ENCODE measurements at regions of chr2 and their contacts with region 1.

Region 1: GRCh38 chr2:45643543-45644542 is 7.6 kb upstream of the PRKCE start:
- DNase-seq: peak; percentile 70
- H3K4me3 ChIP-seq: peak overlapping the region; percentile 62
- H3K27ac ChIP-seq: no peak overlapping the region
- H3K4me1 ChIP-seq: peaks cover 3% of the 10 kb centered on the region
- CTCF ChIP-seq: peak; percentile 92

Region 2: DNA sequence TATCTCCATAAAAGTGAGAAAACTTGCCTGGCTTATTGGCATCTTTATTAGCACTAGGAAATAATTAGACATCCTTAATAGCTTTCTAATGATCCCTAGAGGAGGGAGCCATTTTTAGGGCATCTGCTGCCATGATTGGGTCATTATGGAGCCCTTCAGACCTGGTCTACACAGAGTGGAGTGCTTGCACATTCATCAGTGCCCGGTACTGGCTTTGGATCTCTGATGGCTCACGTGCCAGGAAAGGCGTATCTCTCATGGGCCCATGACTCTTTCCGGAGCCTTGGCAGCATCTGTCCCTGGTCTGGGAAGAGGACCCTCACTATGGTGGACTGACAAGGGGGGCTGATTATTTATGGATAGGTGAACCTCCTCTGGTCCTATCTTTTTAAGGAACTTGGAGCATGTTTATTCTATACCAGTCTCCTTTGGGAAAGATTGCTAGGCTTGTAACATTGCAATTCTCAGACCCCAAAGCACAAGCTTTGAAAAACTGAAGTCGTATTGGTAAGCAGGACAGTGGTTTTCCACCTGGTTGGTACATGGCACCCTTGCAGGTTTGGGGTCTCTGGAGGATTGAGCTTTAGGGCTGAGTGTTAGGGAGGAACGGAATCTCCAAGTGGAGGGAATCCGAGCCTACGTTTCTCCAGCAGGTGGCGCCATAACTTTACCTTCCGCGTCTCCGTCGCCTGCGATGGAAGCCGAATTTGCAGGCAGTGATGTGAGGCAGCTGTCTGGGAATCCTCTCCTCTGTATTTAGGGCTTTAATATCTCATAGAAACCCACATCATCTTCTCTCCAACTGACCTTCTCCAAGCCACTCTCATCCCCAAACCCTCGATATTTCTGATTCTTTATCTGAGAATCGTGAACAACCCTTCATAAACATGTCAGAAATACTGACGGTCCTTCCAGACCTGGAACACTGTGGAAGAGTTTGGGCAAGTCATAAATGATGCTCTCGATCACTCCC is 662.4 kb before region 1 on chr2:
- CTCF ChIA-PET with region 1: no interaction called
- POLR2A ChIA-PET with region 1: no interaction called
- intact Hi-C with region 1: loop called (anchors 5 kb)
- DNase-seq: peak; percentile 87
- H3K4me3 ChIP-seq: no peak overlapping the region
- H3K27ac ChIP-seq: peak overlapping the region; percentile 37
- H3K4me1 ChIP-seq: peaks cover 21% of the 10 kb centered on the region
- CTCF ChIP-seq: peak; percentile 96

Region 3: GRCh38 chr2:45833968-45834344 is 190.1 kb after region 1 on chr2:
- CTCF ChIA-PET with region 1: interaction called, 4 read pairs
- POLR2A ChIA-PET with region 1: interaction called, 6 read pairs
- intact Hi-C with region 1: loop called (anchors 1 kb)
- DNase-seq: peak; percentile 86
- H3K4me3 ChIP-seq: peak overlapping the region; percentile 32
- H3K27ac ChIP-seq: peak overlapping the region; percentile 83
- H3K4me1 ChIP-seq: peaks cover 57% of the 10 kb centered on the region
- CTCF ChIP-seq: no peak

Region 4: DNA sequence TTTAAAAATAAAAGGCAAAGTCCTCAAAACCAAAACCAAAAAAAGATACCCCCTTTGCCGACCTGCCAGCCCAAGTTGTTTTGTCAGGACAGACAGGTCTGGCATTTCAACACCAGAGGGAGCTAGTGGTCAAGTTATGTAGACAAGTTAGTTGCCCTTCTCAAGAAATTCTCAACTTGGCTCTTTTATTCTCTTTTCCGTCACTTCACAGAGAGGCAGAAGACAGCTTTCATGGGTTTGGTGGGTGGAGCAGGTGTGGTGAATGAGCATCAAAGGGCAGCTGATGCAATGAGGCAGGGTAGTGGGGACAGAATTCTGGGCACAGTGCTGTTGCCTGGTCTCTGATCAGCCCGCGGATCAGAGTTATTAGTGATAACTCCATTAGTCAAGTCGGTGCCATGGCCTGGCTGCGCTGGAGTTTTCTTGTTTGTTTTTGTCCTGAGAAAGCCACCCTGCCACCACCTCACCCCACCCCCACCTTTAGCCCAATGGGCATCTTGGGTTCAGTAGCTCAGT is 349.7 kb after region 1 on chr2:
- CTCF ChIA-PET with region 1: no interaction called
- POLR2A ChIA-PET with region 1: no interaction called
- intact Hi-C with region 1: loop called (anchors 1 kb)
- DNase-seq: peak; percentile 73
- H3K4me3 ChIP-seq: no peak overlapping the region
- H3K27ac ChIP-seq: no peak overlapping the region
- H3K4me1 ChIP-seq: no peaks in the 10 kb centered on the region
- CTCF ChIP-seq: peak; percentile 83

Region 5: DNA sequence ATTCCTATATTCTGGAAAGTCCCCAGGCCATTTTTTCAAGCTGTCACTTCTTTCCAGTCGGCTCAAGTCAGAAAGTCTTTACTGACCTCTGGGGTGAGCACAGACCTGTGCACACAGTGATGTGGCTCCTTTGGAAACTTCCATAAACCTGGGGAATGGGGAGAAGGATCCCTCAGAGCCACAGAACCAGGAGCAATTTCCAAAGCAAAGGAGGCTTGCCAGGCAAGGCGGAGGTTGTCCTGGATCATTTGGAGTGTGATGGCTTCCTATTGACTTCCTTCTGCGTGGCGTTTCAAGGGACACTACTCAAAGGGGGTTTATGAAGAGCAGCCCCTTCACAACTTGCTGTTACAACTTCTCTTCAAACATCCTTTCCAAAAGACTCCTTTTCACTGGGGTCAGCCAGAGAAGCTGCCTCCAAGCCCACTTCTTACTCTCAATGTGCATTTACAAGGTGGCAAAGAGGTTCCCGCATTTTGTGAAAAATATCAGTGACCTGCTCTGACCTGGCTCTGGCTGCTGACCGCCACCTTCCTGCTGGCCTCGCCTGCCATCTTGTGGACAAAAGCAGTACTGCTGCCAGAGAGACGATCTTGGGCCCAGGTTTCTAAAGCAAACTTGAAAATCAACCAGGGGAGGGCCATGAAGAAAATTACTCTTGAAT is 817.3 kb after region 1 on chr2:
- CTCF ChIA-PET with region 1: no interaction called
- POLR2A ChIA-PET with region 1: no interaction called
- intact Hi-C with region 1: loop called (anchors 1 kb)
- DNase-seq: peak; percentile 71
- H3K4me3 ChIP-seq: peak overlapping the region; percentile 32
- H3K27ac ChIP-seq: peak overlapping the region; percentile 57
- H3K4me1 ChIP-seq: peaks cover 34% of the 10 kb centered on the region
- CTCF ChIP-seq: peak; percentile 99